AG04449 (cell line): ENCODE measurements at regions of chr19 and their contacts with region 1.

Region 1: GRCh38 chr19:34041925-34042521 is 130.3 kb upstream of the LSM14A start:
- DNase-seq: no peak
- H3K4me3 ChIP-seq: no peak overlapping the region
- CTCF ChIP-seq: peak; percentile 84

Region 2: GRCh38 chr19:34088303-34088702 is 46.3 kb after region 1 on chr19:
- CTCF ChIA-PET with region 1: interaction called, 12 read pairs
- POLR2A ChIA-PET with region 1: no interaction called
- DNase-seq: no peak
- H3K4me3 ChIP-seq: no peak overlapping the region
- CTCF ChIP-seq: no peak